HCT116 (cell line): ENCODE measurements at regions of chrX and their contacts with region 1.

Region 1: GRCh38 chrX:47560831-47561652 is at the start of gene ARAF:
- DNase-seq: peak; percentile 99
- ATAC-seq: peak; percentile 96
- H3K4me3 ChIP-seq: peak within 1 kb of the TSS; percentile 65 to 79
- H3K27ac ChIP-seq: peak within 1 kb of the TSS; percentile 72
- H3K4me1 ChIP-seq: peaks cover 0 to 15% of the 10 kb centered on the region in 2 experiments; a peak in 1 of 4 replicates
- H3K27me3 ChIP-seq: no peaks in the 10 kb centered on the region
- CTCF ChIP-seq: no peak
- POLR2A ChIP-seq: peak; percentile 33
- RAD21 ChIP-seq: no peak
- total RNA-seq, gene ARAF: 35.4 TPM

Region 2: GRCh38 chrX:47628980-47629379 is 67.9 kb after region 1 on chrX:
- CTCF ChIA-PET with region 1: no interaction called
- POLR2A ChIA-PET with region 1: no interaction called
- RAD21 ChIA-PET with region 1: no interaction called
- intact Hi-C with region 1: loop called (anchors 5 kb)
- DNase-seq: no peak
- ATAC-seq: peak; percentile 64
- H3K4me3 ChIP-seq: no peak overlapping the region
- H3K27ac ChIP-seq: no peak overlapping the region
- H3K4me1 ChIP-seq: no peaks in the 10 kb centered on the region
- H3K27me3 ChIP-seq: no peaks in the 10 kb centered on the region
- CTCF ChIP-seq: peak; percentile 21 to 27 (median 24); a peak in 2 of 6 replicates
- POLR2A ChIP-seq: no peak
- RAD21 ChIP-seq: peak; percentile 60

Region 3: DNA sequence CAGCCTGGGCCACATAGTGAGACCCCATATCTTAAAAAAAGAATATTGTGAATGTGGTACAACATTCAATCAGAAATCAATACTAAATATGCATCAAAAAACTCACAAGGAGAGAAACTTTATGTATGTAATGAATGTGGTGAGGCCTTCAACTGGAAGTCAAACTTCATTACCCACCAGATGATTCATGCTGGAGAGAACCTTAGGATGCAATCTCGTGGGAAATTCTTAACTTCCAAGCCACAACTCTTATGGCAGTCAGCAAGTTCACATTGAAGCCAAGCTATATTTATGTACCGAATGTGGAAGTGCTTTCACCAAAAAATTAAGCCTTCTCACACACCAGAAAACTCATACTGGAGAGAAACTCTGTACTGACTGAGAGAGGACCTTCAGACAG is 182.5 kb after region 1 on chrX:
- CTCF ChIA-PET with region 1: no interaction called
- POLR2A ChIA-PET with region 1: no interaction called
- RAD21 ChIA-PET with region 1: no interaction called
- intact Hi-C with region 1: loop called (anchors 2 kb)
- DNase-seq: no peak
- ATAC-seq: no peak
- H3K4me3 ChIP-seq: no peak overlapping the region
- H3K27ac ChIP-seq: no peak overlapping the region
- H3K4me1 ChIP-seq: no peaks in the 10 kb centered on the region
- H3K27me3 ChIP-seq: no peaks in the 10 kb centered on the region
- CTCF ChIP-seq: no peak
- POLR2A ChIP-seq: no peak
- RAD21 ChIP-seq: no peak

Region 4: GRCh38 chrX:47836164-47837072 is 275.4 kb after region 1 on chrX and contains the start of gene ZNF81:
- CTCF ChIA-PET with region 1: no interaction called
- POLR2A ChIA-PET with region 1: no interaction called
- RAD21 ChIA-PET with region 1: no interaction called
- intact Hi-C with region 1: loop called (anchors 10 kb)
- DNase-seq: peak; percentile 90
- ATAC-seq: peak; percentile 94
- H3K4me3 ChIP-seq: peak within 1 kb of the TSS; percentile 52 to 69
- H3K27ac ChIP-seq: peak within 1 kb of the TSS; percentile 39; the same call in 1 of the 2 replicates
- H3K4me1 ChIP-seq: no peaks in the 10 kb centered on the region
- H3K27me3 ChIP-seq: no peaks in the 10 kb centered on the region
- CTCF ChIP-seq: no peak
- POLR2A ChIP-seq: no peak
- RAD21 ChIP-seq: no peak
- total RNA-seq, gene ZNF81: 4.8 TPM

Region 5: DNA sequence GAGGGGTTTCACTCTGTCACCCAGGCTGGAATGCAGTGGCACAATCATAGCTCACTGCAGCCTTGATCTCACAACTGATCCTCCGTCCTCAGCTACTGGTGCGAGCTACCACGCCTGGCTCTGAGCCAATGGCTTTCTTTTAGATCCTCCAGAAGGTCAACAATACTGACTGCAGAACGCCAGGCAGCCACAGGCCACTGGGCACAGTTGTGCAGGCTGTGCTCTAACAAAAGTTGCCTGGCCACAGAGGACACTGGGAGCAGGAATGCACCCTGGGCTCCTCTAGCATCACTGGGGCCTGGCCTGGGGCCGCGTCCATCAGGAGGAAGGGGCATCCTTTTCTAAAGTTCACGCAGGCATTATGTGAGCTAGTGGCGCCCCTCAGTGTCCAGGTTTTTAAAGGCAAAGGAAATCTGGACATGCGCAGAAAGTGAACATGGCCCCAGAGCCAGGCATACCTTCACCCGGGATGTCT is 932.9 kb after region 1 on chrX:
- CTCF ChIA-PET with region 1: no interaction called
- POLR2A ChIA-PET with region 1: no interaction called
- RAD21 ChIA-PET with region 1: no interaction called
- intact Hi-C with region 1: loop called (anchors 10 kb)
- DNase-seq: peak; percentile 38
- ATAC-seq: peak; percentile 48
- H3K4me3 ChIP-seq: no peak overlapping the region
- H3K27ac ChIP-seq: no peak overlapping the region
- H3K4me1 ChIP-seq: peaks cover 10 to 60% of the 10 kb centered on the region in 2 experiments
- H3K27me3 ChIP-seq: no peaks in the 10 kb centered on the region
- CTCF ChIP-seq: peak in 1 of 3 experiments; percentile 49; a peak in 2 of 6 replicates
- POLR2A ChIP-seq: no peak
- RAD21 ChIP-seq: no peak